Naive thymus-derived CD4-positive, alpha-beta T cell (primary cell): ENCODE measurements at regions of chr1 and their contacts with region 1.

Region 1: GRCh38 chr1:86704458-86704971 is at the start of gene SH3GLB1:
- DNase-seq: peak; percentile 83 to 93 (median 92)
- ATAC-seq: peak; percentile 93
- H3K4me3 ChIP-seq: peak within 1 kb of the TSS; percentile 83
- H3K4me3 Mint-ChIP-seq: peak within 1 kb of the TSS; percentile 95 to 99 (median 97)
- H3K27ac ChIP-seq: peak within 1 kb of the TSS; percentile 86
- H3K27ac Mint-ChIP-seq: peak within 1 kb of the TSS; percentile 96 to 99 (median 97)
- H3K4me1 ChIP-seq: peaks cover 16 to 17% of the 10 kb centered on the region in 2 donors
- H3K4me1 Mint-ChIP-seq: peaks cover 34 to 67% (median 56%) of the 10 kb centered on the region in 7 donors
- H3K27me3 ChIP-seq: no peaks in the 10 kb centered on the region
- H3K27me3 Mint-ChIP-seq: no peaks in the 10 kb centered on the region
- total RNA-seq, gene SH3GLB1: 36.7 to 72.0 (median 49.8) TPM

Region 2: GRCh38 chr1:84973498-84974334 is 1730.8 kb before region 1 on chr1:
- CTCF ChIA-PET with region 1: no interaction called
- POLR2A ChIA-PET with region 1: no interaction called
- intact Hi-C with region 1: no loop called
- DNase-seq: peak in 1 of 9 donors; percentile 49
- ATAC-seq: no peak
- H3K4me3 ChIP-seq: no peak overlapping the region
- H3K4me3 Mint-ChIP-seq: no peak overlapping the region
- H3K27ac ChIP-seq: no peak overlapping the region
- H3K27ac Mint-ChIP-seq: peak overlapping the region in 1 of 9 donors; percentile 72
- H3K4me1 ChIP-seq: peaks cover 0 to 23% of the 10 kb centered on the region in 2 donors
- H3K4me1 Mint-ChIP-seq: peaks cover 0 to 69% (median 0%) of the 10 kb centered on the region in 7 donors
- H3K27me3 ChIP-seq: no peaks in the 10 kb centered on the region
- H3K27me3 Mint-ChIP-seq: peaks cover 0 to 21% (median 0%) of the 10 kb centered on the region in 5 donors

Region 3: GRCh38 chr1:86395771-86396497 is 308.6 kb before region 1 on chr1 and contains the start of gene ODF2L:
- CTCF ChIA-PET with region 1: no interaction called
- POLR2A ChIA-PET with region 1: interaction called, 21 read pairs
- intact Hi-C with region 1: loop called (anchors 1 kb)
- DNase-seq: peak; percentile 73 to 92 (median 90)
- ATAC-seq: peak; percentile 100
- H3K4me3 ChIP-seq: peak within 1 kb of the TSS; percentile 80
- H3K4me3 Mint-ChIP-seq: peak within 1 kb of the TSS; percentile 90 to 100 (median 98)
- H3K27ac ChIP-seq: peak within 1 kb of the TSS; percentile 90
- H3K27ac Mint-ChIP-seq: peak within 1 kb of the TSS; percentile 94 to 99 (median 98)
- H3K4me1 ChIP-seq: peaks cover 17 to 20% of the 10 kb centered on the region in 2 donors
- H3K4me1 Mint-ChIP-seq: peaks cover 23 to 70% (median 58%) of the 10 kb centered on the region in 7 donors
- H3K27me3 ChIP-seq: no peaks in the 10 kb centered on the region
- H3K27me3 Mint-ChIP-seq: peaks cover 0 to 7% (median 0%) of the 10 kb centered on the region in 5 donors
- total RNA-seq, gene ODF2L: 50.3 to 75.3 (median 52.2) TPM

Region 4: GRCh38 chr1:86741947-86742572 is 37.5 kb after region 1 on chr1:
- CTCF ChIA-PET with region 1: interaction called, 11 read pairs
- POLR2A ChIA-PET with region 1: interaction called, 20 read pairs
- intact Hi-C with region 1: loop called (anchors 1 kb)
- DNase-seq: peak in 7 of 9 donors; percentile 12 to 43 (median 26)
- ATAC-seq: no peak
- H3K4me3 ChIP-seq: no peak overlapping the region
- H3K4me3 Mint-ChIP-seq: peak overlapping the region in 1 of 10 donors; percentile 60
- H3K27ac ChIP-seq: no peak overlapping the region
- H3K27ac Mint-ChIP-seq: no peak overlapping the region
- H3K4me1 ChIP-seq: peaks cover 5 to 12% of the 10 kb centered on the region in 2 donors
- H3K4me1 Mint-ChIP-seq: peaks cover 0 to 6% (median 0%) of the 10 kb centered on the region in 7 donors
- H3K27me3 ChIP-seq: no peaks in the 10 kb centered on the region
- H3K27me3 Mint-ChIP-seq: no peaks in the 10 kb centered on the region

Region 5: GRCh38 chr1:86948212-86948611 is 243.7 kb after region 1 on chr1:
- CTCF ChIA-PET with region 1: no interaction called
- POLR2A ChIA-PET with region 1: no interaction called
- intact Hi-C with region 1: no loop called
- DNase-seq: no peak
- ATAC-seq: no peak
- H3K4me3 ChIP-seq: no peak overlapping the region
- H3K4me3 Mint-ChIP-seq: no peak overlapping the region
- H3K27ac ChIP-seq: no peak overlapping the region
- H3K27ac Mint-ChIP-seq: no peak overlapping the region
- H3K4me1 ChIP-seq: no peaks in the 10 kb centered on the region
- H3K4me1 Mint-ChIP-seq: peaks cover 2 to 30% (median 19%) of the 10 kb centered on the region in 7 donors
- H3K27me3 ChIP-seq: no peaks in the 10 kb centered on the region
- H3K27me3 Mint-ChIP-seq: no peaks in the 10 kb centered on the region

Region 6: GRCh38 chr1:87045761-87046304 is 341.3 kb after region 1 on chr1:
- CTCF ChIA-PET with region 1: interaction called, 4 read pairs
- POLR2A ChIA-PET with region 1: no interaction called
- intact Hi-C with region 1: loop called (anchors 10 kb)
- DNase-seq: peak; percentile 7 to 91 (median 85)
- ATAC-seq: peak; percentile 82
- H3K4me3 ChIP-seq: no peak overlapping the region
- H3K4me3 Mint-ChIP-seq: peak overlapping the region; percentile 31 to 87 (median 64)
- H3K27ac ChIP-seq: peak overlapping the region; percentile 58
- H3K27ac Mint-ChIP-seq: peak overlapping the region; percentile 52 to 100 (median 94)
- H3K4me1 ChIP-seq: peaks cover 10 to 21% of the 10 kb centered on the region in 2 donors
- H3K4me1 Mint-ChIP-seq: peaks cover 24 to 72% (median 60%) of the 10 kb centered on the region in 7 donors
- H3K27me3 ChIP-seq: no peaks in the 10 kb centered on the region
- H3K27me3 Mint-ChIP-seq: no peaks in the 10 kb centered on the region

Region 7: DNA sequence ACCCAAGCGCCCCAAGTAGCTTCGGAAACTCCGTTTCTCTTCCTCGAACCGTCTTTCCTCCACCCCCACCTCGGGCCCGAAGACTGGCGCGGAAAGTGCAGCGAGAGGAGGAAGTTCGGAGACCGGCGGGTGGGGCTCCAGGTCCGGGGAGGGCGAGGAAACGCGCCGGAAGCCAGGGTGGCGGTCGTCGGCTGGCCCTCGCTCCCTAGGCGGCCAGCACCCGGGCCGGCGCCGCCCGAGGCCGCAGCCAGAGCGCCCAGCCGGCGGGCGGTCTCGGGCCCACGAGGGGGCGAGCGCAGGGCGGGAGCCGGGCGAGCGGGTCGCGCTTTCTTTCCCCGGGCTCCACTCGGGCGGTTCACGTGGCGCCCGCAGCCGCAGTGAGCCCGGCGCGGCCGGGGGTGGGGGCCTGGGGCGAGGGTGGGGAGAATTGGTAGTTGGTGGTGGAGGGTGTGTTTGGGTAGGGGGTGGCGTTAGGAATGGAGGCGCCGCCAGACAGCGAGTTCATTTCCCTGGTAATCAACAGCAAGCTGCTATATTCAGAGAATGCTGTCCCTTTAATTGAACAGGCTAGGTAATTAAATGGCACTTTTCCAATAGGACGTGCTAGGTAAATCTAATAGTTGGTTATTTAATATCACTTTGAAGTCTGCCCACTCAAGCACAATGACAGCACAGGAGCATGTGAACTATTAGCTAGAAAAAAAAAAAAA is 630.8 kb after region 1 on chr1:
- CTCF ChIA-PET with region 1: no interaction called
- POLR2A ChIA-PET with region 1: no interaction called
- intact Hi-C with region 1: loop called in 1 of 2 experiments (anchors 10 kb)
- DNase-seq: peak; percentile 30 to 68 (median 52)
- ATAC-seq: peak; percentile 68
- H3K4me3 ChIP-seq: peak overlapping the region; percentile 37
- H3K4me3 Mint-ChIP-seq: peak overlapping the region; percentile 81 to 94 (median 90)
- H3K27ac ChIP-seq: peak overlapping the region; percentile 38
- H3K27ac Mint-ChIP-seq: peak overlapping the region; percentile 16 to 95 (median 76)
- H3K4me1 ChIP-seq: peaks cover 28 to 29% of the 10 kb centered on the region in 2 donors
- H3K4me1 Mint-ChIP-seq: peaks cover 19 to 63% (median 46%) of the 10 kb centered on the region in 7 donors
- H3K27me3 ChIP-seq: peaks cover 0 to 10% of the 10 kb centered on the region in 2 donors
- H3K27me3 Mint-ChIP-seq: peaks cover 11 to 45% (median 27%) of the 10 kb centered on the region in 5 donors